Common myeloid progenitor, CD34-positive (primary cell): ENCODE measurements at regions of chr7 and their contacts with region 1.

Region 1: DNA sequence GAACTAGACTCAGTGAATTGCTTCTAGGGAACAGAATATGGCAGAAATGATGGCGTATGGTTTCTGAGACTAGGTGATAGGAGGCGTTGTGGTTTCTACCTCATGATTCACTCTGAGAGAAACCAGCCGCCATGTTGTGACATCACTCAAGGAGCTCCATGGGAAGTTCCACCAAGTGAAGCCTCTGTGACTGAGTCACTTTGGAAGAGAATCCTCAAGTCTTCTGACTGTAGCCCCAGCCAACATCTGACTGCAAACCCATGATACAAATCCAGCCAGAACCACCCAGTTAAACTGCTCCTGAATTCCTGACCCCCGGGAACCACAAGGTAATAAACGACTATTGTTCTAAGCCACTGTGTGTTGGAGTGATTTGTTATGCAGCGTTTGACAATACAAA is 91.0 kb upstream of the CARD11 start:
- DNase-seq: peak; percentile 39 to 79 (median 76)
- H3K4me3 ChIP-seq: no peak overlapping the region
- H3K27ac ChIP-seq: no peak overlapping the region
- H3K4me1 ChIP-seq: peaks cover 7 to 26% (median 13%) of the 10 kb centered on the region in 4 experiments
- H3K27me3 ChIP-seq: no peaks in the 10 kb centered on the region

Region 2: GRCh38 chr7:3117488-3118231 is 17.1 kb before region 1 on chr7:
- CTCF ChIA-PET with region 1: interaction called, 12 read pairs
- POLR2A ChIA-PET with region 1: no interaction called
- DNase-seq: peak; percentile 21 to 67 (median 67)
- H3K4me3 ChIP-seq: no peak overlapping the region
- H3K27ac ChIP-seq: no peak overlapping the region
- H3K4me1 ChIP-seq: peaks cover 4 to 35% (median 33%) of the 10 kb centered on the region in 4 experiments
- H3K27me3 ChIP-seq: no peaks in the 10 kb centered on the region

Region 3: DNA sequence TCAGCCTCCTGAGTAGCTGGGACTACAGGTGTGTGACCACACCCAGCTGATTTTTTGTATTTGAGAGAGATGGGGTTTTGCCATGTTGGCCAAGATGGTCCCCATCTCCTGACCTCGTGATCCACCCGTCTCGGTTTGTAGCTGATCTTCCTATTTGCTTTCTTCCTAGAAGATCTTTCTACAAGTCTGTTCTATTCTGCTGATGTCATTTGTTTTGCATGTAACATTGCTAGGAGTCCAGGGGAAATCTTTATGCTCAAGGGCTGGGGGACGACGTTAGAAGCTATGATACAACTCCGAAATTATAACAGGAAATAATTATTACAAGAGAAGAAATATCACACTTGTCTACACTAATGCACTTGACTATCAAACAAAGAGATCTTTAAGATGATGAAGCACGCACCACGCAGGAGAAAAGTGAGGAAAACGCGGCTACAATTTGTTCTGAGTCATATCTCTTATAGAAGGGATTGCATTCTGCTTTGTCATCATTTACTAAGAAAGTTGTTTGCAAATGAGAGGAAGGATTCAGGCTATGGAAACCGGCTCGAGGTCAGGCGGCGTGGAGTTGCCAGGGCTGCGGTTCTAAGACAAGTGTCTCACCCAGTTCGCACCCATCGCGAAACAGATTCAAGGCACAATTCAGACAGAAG is 12.0 kb after region 1 on chr7:
- CTCF ChIA-PET with region 1: interaction called, 27 read pairs
- POLR2A ChIA-PET with region 1: interaction called, 6 read pairs
- DNase-seq: peak; percentile 70 to 94 (median 88)
- H3K4me3 ChIP-seq: peak overlapping the region in 2 of 7 experiments; percentile 2 to 45
- H3K27ac ChIP-seq: no peak overlapping the region
- H3K4me1 ChIP-seq: peaks cover 2 to 40% (median 36%) of the 10 kb centered on the region in 4 experiments
- H3K27me3 ChIP-seq: no peaks in the 10 kb centered on the region

Region 4: DNA sequence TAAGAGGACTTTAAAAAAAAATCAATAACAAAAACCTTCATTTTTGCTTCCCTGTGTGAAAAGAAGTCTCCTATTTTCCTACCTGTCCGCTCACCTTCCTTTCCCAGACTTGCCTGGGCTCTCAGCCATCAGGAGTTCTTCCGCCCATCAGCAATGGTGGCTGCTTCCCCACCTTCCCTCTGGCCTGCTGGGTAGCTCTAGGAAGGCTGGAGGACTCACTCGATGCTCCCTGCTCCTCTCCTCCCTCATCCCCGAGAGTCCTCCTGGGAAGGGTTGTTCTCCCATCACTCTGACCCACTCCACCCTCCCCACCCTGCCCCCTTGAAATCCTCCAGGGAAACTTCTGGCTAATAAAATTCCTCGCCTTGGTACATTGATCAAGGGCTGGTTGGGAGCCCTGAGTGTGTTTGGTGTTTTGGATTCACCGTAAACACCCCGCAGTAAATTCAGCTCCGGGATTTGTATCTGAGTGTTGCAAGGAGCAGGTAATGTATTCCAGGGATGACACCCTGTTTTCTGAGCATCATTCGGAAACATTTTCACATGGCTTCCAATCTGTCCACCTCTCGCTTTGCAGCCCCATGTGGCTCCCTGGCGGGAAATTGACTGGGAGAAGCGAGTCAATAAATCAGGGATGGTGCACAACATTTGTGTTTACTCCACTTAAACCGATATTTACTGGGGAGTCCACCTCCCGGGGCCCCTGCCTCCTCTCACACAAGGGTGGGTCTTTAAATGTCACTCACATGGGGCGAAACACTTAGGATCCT is 40.0 kb after region 1 on chr7:
- CTCF ChIA-PET with region 1: no interaction called
- POLR2A ChIA-PET with region 1: no interaction called
- DNase-seq: no peak
- H3K4me3 ChIP-seq: no peak overlapping the region
- H3K27ac ChIP-seq: no peak overlapping the region
- H3K4me1 ChIP-seq: peaks cover 0 to 4% (median 0%) of the 10 kb centered on the region in 4 experiments
- H3K27me3 ChIP-seq: no peaks in the 10 kb centered on the region